Tibial artery (tissue), 4 donors: ENCODE measurements at regions of chr11 and their contacts with region 1.

Region 1: GRCh38 chr11:119356349-119357031 is 10.0 kb upstream of the MFRP start:
- DNase-seq: peak; percentile 80 to 90
- H3K4me3 ChIP-seq: peak overlapping the region; percentile 42 to 55
- H3K27ac ChIP-seq: peak overlapping the region; percentile 54 to 63
- H3K4me1 ChIP-seq: peaks cover 0 to 24% (median 18%) of the 10 kb centered on the region in 4 donors
- H3K27me3 ChIP-seq: no peaks in the 10 kb centered on the region
- CTCF ChIP-seq: peak; percentile 85 to 95

Region 2: DNA sequence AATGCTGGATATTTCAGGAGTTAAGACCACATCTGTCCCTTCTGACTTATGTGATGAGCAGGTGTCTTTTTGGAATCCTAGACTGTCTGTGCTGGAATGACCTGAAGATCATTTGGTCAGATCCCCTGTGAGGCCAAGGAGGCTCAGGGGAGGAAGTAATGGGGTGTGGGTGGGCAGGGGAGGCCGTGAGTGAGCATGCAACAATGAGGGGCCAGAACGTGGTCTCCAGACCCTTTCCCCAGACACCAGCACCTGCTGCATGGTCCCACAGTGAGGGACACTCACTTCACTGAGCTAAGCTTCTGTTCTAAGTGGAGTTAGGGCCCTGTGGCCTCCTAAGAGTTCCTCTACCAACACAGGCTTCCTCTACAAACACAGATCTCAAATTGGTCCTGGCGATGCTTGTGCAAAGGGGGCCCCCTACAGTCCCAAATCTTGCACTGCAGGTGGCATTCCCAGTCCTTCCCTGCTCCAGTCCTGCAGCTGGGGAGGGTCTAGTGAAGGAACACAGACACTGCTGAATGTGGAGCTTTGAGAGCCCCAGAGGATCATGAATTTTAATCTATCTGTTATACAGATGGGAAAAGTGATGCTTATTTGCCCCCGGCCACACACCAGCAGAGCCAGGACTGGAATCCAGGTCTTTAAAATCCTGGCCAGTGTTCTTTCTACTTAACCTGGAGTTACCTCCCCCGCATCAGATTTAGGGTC is 17.6 kb after region 1 on chr11:
- intact Hi-C with region 1: loop called (anchors 2 kb)
- DNase-seq: peak; percentile 70 to 85
- H3K4me3 ChIP-seq: no peak overlapping the region
- H3K27ac ChIP-seq: peak overlapping the region in 1 of 2 donors; percentile 79
- H3K4me1 ChIP-seq: peaks cover 0 to 65% (median 55%) of the 10 kb centered on the region in 4 donors
- H3K27me3 ChIP-seq: no peaks in the 10 kb centered on the region
- CTCF ChIP-seq: peak; percentile 90 to 91

Region 3: DNA sequence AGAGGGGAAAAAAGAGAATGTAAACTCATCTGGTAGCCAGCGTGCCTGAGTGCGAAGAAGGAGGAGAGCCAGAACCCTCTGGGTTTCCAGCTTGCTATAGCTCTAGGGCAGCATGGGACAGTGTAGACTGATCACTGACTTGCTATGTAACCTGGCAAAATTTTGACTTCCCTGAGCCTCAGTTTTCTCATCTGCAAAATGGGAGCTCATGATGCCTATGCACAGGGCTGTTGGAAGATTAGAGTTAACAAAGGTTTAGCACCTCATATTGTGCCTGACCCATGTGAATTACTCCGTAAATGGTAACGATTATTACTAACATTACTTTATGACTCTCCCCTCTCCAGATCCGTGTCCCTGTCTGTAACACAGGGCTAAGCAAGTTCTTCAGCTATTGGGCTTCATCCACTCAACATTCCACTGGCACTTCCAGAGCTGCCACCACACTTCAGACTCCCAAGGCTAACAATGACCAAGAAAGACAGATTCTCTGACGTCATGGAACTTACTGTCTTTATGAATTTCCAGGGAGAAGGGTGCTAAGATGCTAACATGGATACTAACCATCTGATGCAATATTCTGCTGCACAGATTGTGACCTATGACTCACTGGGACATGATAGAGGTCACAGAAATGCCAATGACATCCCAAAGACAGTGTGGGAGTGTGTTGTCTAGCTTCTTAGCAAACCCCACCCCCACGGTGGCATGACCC is 586.2 kb after region 1 on chr11:
- intact Hi-C with region 1: no loop called
- DNase-seq: no peak
- H3K4me3 ChIP-seq: no peak overlapping the region
- H3K27ac ChIP-seq: no peak overlapping the region
- H3K4me1 ChIP-seq: no peaks in the 10 kb centered on the region
- H3K27me3 ChIP-seq: peaks cover 0 to 29% of the 10 kb centered on the region in 2 donors
- CTCF ChIP-seq: no peak

Region 4: DNA sequence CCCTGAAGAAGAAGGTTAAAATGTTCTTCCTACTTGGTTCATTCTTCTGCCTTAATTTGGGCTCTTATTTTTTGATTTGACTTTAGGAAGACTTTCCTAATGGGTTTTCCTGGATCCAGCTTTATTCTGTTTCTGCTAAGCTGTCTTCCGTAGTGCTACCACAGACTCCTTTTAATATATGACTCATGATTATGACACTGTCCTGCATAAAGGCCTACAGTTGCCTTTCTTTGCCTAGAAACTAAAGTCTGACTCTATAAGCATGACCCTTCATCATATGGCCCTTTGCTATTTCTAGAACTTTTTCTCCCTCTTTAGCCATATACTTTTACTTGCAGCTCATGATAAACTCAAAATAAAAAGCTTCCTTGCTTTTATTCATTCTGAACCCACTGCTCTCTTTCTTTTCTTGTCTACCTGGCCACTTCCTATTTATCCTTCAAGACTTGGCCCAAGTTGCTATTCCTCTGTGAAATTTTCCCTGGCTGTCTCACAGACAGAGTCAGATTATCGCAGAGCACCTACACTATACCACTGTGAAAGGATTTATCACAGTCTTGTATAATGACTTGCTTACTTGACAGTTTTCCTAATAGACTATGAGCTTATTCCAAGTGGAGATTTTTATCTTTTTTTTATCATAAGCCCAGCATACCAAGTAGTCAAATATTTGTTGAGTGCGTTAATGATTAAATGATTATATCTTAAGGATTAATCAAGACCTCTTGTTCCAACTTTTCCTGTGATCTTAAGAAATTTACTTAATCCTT is 1692.2 kb after region 1 on chr11:
- intact Hi-C with region 1: no loop called
- DNase-seq: no peak
- H3K4me3 ChIP-seq: no peak overlapping the region
- H3K27ac ChIP-seq: no peak overlapping the region
- H3K4me1 ChIP-seq: no peaks in the 10 kb centered on the region
- H3K27me3 ChIP-seq: no peaks in the 10 kb centered on the region
- CTCF ChIP-seq: no peak